Right ventricle myocardium inferior (tissue), 1 donor: ENCODE measurements at regions of chr6 and their contacts with region 1.

Region 1: DNA sequence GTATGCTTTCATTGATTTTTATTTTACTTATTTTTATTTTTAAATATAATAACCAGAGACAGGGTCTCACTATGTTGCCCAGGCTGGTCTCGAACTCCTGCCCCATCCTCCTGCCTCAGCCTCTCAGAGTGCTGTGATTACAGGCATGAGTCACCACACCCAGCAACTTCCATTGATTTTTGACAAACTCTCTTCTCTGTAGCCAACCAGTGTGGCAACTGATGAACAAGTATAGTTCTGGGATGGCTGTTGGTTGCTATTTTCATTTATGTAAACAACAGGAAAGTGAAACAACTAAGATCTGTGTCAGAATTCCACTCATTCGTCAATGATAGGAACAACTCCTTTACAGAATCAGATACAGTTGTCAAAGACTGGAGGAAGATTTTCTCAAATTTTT is 356.7 kb upstream of the JARID2 start:
- DNase-seq: no peak
- ATAC-seq: no peak

Region 2: GRCh38 chr6:14440940-14441781 is 448.0 kb before region 1 on chr6:
- intact Hi-C with region 1: no loop called
- DNase-seq: no peak
- ATAC-seq: peak; percentile 90

Region 3: GRCh38 chr6:14596410-14596809 is 292.8 kb before region 1 on chr6:
- intact Hi-C with region 1: no loop called
- DNase-seq: peak; percentile 78
- ATAC-seq: no peak

Region 4: GRCh38 chr6:15036690-15037245 is 147.6 kb after region 1 on chr6:
- intact Hi-C with region 1: loop called (anchors 5 kb)
- DNase-seq: peak; percentile 83
- ATAC-seq: peak; percentile 96

Region 5: GRCh38 chr6:15365273-15365687 is 476.1 kb after region 1 on chr6:
- intact Hi-C with region 1: no loop called
- DNase-seq: peak; percentile 91
- ATAC-seq: peak; percentile 86

Region 6: GRCh38 chr6:15628499-15629131 is 739.4 kb after region 1 on chr6:
- intact Hi-C with region 1: no loop called
- DNase-seq: no peak
- ATAC-seq: no peak